ENCODE measurements at regions of chrX and their contacts with region 1.

Region 1: GRCh38 chrX:9873952-9874351 is 87.7 kb downstream of the SHROOM2 start:
- DNase-seq: peak; percentile 61
- ATAC-seq: peak; percentile 69
- H3K4me3 ChIP-seq: peak overlapping the region; percentile 2; the same call in 1 of the 2 replicates
- H3K27ac ChIP-seq: peak overlapping the region; percentile 43
- H3K4me1 ChIP-seq: peaks cover 17% of the 10 kb centered on the region
- H3K27me3 ChIP-seq: no peaks in the 10 kb centered on the region
- CTCF ChIP-seq: peak; percentile 67

Region 2: GRCh38 chrX:8981723-8982122 is 892.2 kb before region 1 on chrX:
- CTCF ChIA-PET with region 1: no interaction called
- POLR2A ChIA-PET with region 1: no interaction called
- intact Hi-C with region 1: no loop called
- DNase-seq: no peak
- ATAC-seq: no peak
- H3K4me3 ChIP-seq: no peak overlapping the region
- H3K27ac ChIP-seq: no peak overlapping the region
- H3K4me1 ChIP-seq: no peaks in the 10 kb centered on the region
- H3K27me3 ChIP-seq: no peaks in the 10 kb centered on the region
- CTCF ChIP-seq: no peak

Region 3: DNA sequence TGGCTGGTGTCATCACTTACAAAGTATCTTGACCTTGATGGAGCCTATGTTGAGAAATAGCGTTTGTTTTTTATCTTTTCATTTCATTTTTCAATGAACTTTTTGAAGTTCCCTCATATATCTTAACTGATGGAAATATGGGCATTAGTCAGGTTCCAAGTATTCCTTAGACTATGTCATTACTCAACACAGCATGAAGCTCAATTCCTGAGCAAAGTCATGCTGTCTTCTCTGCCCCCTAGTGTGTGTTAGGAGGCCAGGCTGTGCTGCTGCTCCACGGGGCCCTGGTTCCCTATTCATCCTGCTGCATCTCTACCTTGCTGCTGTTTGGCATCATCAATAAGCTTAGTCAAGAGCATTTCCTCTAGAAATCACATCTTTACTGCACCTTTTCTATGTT is 149.2 kb before region 1 on chrX:
- CTCF ChIA-PET with region 1: no interaction called
- POLR2A ChIA-PET with region 1: no interaction called
- intact Hi-C with region 1: loop called (anchors 10 kb)
- DNase-seq: no peak
- ATAC-seq: no peak; the same call in 1 of the 2 replicates
- H3K4me3 ChIP-seq: no peak overlapping the region
- H3K27ac ChIP-seq: no peak overlapping the region
- H3K4me1 ChIP-seq: no peaks in the 10 kb centered on the region
- H3K27me3 ChIP-seq: no peaks in the 10 kb centered on the region
- CTCF ChIP-seq: no peak

Region 4: DNA sequence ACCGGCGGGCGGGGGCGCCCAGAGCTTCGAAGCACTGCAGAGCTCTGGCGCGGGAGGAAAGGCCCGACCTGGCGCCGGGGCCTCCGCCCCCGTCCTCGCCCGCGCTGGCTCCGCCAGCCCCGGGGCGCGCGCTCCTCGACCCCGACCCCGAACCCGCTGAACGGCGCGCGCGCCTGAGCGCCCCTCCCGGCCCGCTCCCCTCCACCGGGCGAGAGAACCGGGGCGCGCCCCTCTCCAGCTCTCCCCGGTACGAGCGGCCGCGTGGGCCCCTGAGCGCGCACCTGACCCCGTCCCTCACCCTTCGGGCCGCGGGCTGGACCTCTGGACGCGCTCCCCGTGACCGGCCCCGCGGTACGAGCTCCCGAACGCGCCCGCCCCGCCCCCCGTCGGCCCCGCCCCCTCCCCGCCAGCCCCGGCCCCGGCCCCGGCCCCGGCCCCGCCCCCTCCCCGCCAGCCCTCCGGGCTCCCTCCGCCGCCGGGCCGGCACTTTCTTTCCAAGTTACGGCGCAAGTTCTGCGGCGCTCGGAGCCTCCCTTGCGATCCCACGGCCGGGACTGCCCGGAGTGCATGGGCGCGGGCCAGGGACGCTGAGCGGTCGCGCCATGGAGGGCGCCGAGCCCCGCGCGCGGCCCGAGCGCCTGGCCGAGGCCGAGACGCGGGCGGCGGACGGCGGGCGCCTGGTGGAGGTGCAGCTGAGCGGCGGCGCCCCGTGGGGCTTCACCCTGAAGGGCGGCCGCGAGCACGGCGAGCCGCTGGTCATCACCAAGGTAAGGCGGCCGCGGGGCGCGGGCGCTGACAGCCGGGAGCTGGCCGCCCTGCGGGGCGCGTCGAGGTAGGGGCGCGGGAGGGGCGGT is 87.8 kb before region 1 on chrX and contains the start of gene SHROOM2:
- CTCF ChIA-PET with region 1: no interaction called
- POLR2A ChIA-PET with region 1: no interaction called
- intact Hi-C with region 1: loop called (anchors 5 kb)
- DNase-seq: peak; percentile 23
- ATAC-seq: peak; percentile 45
- H3K4me3 ChIP-seq: peak within 1 kb of the TSS; percentile 95
- H3K27ac ChIP-seq: no peak within 1 kb of the TSS
- H3K4me1 ChIP-seq: peaks cover 33% of the 10 kb centered on the region
- H3K27me3 ChIP-seq: no peaks in the 10 kb centered on the region
- CTCF ChIP-seq: no peak
- total RNA-seq, gene SHROOM2: 6.5 and 8.6 TPM in 2 replicates

Region 5: GRCh38 chrX:9829308-9830267 is 44.4 kb before region 1 on chrX:
- CTCF ChIA-PET with region 1: interaction called, 3 read pairs
- POLR2A ChIA-PET with region 1: no interaction called
- intact Hi-C with region 1: loop called (anchors 2 kb)
- DNase-seq: peak; percentile 93
- ATAC-seq: peak; percentile 93
- H3K4me3 ChIP-seq: no peak overlapping the region
- H3K27ac ChIP-seq: peak overlapping the region; percentile 51
- H3K4me1 ChIP-seq: peaks cover 14% of the 10 kb centered on the region
- H3K27me3 ChIP-seq: no peaks in the 10 kb centered on the region
- CTCF ChIP-seq: no peak; the same call in 1 of the 2 replicates